Transverse colon (tissue), 4 donors: ENCODE measurements at regions of chr4 and their contacts with region 1.

Region 1: GRCh38 chr4:20589436-20589835 is 110.8 kb upstream of the PACRGL start:
- DNase-seq: no peak
- H3K4me3 ChIP-seq: no peak overlapping the region
- H3K27ac ChIP-seq: no peak overlapping the region
- H3K4me1 ChIP-seq: peaks cover 6 to 19% (median 11%) of the 10 kb centered on the region in 4 donors
- H3K27me3 ChIP-seq: no peaks in the 10 kb centered on the region
- CTCF ChIP-seq: no peak
- EP300 ChIP-seq: no peak
- POLR2A ChIP-seq: no peak

Region 2: GRCh38 chr4:20554134-20554533 is 35.3 kb before region 1 on chr4:
- in situ Hi-C with region 1: no loop called
- intact Hi-C with region 1: loop called (anchors 2 kb)
- DNase-seq: no peak
- H3K4me3 ChIP-seq: no peak overlapping the region
- H3K27ac ChIP-seq: no peak overlapping the region
- H3K4me1 ChIP-seq: no peaks in the 10 kb centered on the region
- H3K27me3 ChIP-seq: no peaks in the 10 kb centered on the region
- CTCF ChIP-seq: no peak
- EP300 ChIP-seq: no peak
- POLR2A ChIP-seq: no peak